ENCODE measurements at regions of chr7 and their contacts with region 1.

Region 1: DNA sequence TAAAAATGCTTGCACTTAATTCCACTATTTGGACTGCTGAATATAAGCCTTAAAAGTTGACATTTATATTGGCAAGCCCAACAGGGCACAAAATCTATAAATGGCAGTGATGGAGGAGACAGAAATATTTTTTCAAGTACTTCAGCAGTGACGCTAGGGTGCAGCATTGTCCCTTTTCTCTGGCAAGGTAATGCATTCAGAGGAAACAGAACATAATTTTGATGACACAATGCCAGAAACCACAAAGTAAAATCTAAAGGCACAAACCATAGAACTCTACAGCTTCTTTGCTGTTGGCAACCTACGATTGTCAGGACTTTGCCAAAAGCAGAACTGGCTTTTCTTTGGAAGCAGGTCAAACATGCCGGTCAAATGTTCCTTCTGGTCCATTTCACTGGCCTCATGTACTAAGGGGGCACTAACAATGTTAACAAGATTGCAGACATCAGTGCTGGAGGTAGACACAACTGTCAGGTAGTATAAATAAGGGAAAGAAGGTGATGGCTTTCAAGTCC is 30.9 kb upstream of the FAM133B start:
- DNase-seq: no peak

Region 2: DNA sequence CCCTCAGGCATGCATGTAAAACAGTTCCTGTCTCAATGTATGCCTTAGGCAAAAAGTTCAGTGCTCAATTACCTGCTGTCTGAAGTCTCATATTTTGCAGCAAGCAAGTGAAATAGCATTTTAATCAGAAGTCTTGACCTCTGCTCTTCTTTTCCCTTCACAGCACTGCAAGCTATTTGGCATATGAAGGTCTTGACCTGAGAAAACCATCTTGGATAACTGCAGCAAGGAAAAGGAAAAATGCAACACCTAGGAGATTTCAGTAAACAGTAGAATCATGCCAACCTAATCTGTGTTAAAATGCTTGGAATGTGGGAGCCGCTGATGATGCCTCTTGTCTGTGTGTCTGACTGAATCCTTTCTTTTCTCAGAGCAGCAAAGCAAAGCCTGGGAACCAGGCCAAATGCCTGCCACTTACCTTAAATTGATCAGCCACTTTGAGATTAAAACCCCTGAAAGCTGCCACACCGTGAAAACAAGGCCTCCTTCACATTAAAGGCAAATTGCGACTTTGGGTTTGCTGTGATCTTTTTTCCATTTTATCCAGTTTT is 295.7 kb after region 1 on chr7:
- intact Hi-C with region 1: no loop called
- DNase-seq: no peak

Region 3: GRCh38 chr7:92997152-92997551 is 376.1 kb after region 1 on chr7:
- intact Hi-C with region 1: loop called in 1 of 2 experiments (anchors 2 kb)
- DNase-seq: no peak

Region 4: DNA sequence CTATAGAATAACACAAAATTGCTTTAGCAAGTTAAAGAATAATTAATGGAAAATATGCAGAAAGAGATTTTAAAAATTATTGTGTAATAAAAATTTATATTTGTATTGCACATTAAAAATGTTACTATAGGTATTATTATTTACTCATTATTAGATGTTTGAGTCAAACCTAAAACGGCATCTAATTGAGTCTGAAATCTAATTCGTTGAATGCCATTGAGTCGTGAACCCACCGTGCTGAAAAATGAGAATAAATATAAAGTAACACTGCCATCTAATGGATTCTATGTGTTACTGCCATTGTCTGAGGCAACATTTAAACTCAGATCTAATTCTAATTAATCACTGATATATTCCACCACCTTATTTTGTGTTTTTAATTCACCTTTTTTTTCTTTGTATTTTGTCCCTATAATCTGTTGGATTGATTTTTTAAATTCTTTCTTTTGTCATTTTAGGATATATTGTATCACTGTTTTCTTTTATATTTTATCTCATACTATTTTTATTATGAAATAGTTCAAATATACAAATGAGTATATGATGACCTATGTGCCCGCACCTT is 434.5 kb after region 1 on chr7:
- intact Hi-C with region 1: loop called (anchors 5 to 10 kb)
- DNase-seq: no peak